Colonic mucosa (tissue), 4 donors: ENCODE measurements at regions of chr17 and their contacts with region 1.

Region 1: DNA sequence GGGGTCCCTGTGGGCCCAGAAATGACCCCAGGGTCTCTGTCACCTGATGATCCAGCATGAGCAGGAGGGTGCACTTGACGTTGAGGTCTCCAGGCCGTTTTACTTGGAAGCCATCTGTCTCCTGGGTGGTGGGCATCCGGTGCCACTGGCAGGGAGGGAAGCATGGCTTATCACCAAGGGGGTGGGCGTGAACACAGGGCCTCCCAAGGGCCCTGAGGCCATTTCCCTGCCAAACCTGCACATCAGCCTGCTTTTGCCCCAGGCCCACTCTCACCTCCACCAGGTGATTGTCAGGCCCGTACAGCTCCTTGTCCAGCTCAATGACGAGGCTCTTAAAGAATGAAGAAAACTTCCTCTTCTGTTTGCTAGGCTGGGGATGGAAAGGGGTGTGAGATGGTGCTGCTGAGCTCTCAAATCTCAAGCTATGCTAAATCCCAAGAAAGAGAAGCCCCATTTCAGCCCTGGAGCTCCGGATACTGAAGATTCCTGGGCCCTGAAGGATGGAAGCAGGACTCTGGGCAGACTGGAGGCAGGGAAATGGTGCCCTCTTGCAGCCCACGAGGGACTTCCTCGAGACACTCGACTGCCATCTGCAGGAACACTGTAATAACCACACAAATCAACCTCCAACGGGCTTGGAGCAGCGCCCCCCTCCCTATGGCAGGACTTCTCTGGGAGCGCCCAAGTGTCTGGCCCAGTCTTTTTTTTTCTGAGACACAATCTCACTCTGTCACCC is 7.1 kb upstream of the FTSJ3 start:
- DNase-seq: no peak
- H3K4me3 ChIP-seq: no peak overlapping the region
- H3K27ac ChIP-seq: no peak overlapping the region
- H3K4me1 ChIP-seq: peaks cover 7% of the 10 kb centered on the region
- H3K27me3 ChIP-seq: no peaks in the 10 kb centered on the region
- CTCF ChIP-seq: peak; percentile 20

Region 2: GRCh38 chr17:63349478-63350000 is 485.1 kb before region 1 on chr17:
- intact Hi-C with region 1: no loop called
- DNase-seq: no peak
- H3K4me3 ChIP-seq: no peak overlapping the region
- H3K27ac ChIP-seq: peak overlapping the region; percentile 2
- H3K4me1 ChIP-seq: no peaks in the 10 kb centered on the region
- H3K27me3 ChIP-seq: no peaks in the 10 kb centered on the region
- CTCF ChIP-seq: no peak

Region 3: GRCh38 chr17:63621766-63622519 is 212.7 kb before region 1 on chr17 and contains the start of gene MAP3K3:
- intact Hi-C with region 1: loop called (anchors 10 kb)
- DNase-seq: peak; percentile 99
- H3K4me3 ChIP-seq: peak within 1 kb of the TSS; percentile 91
- H3K27ac ChIP-seq: peak within 1 kb of the TSS; percentile 75
- H3K4me1 ChIP-seq: peaks cover 10% of the 10 kb centered on the region
- H3K27me3 ChIP-seq: no peaks in the 10 kb centered on the region
- CTCF ChIP-seq: no peak
- total RNA-seq, gene MAP3K3: 13.4 to 15.5 TPM